ENCODE measurements at regions of chr4 and their contacts with region 1.

Region 1: DNA sequence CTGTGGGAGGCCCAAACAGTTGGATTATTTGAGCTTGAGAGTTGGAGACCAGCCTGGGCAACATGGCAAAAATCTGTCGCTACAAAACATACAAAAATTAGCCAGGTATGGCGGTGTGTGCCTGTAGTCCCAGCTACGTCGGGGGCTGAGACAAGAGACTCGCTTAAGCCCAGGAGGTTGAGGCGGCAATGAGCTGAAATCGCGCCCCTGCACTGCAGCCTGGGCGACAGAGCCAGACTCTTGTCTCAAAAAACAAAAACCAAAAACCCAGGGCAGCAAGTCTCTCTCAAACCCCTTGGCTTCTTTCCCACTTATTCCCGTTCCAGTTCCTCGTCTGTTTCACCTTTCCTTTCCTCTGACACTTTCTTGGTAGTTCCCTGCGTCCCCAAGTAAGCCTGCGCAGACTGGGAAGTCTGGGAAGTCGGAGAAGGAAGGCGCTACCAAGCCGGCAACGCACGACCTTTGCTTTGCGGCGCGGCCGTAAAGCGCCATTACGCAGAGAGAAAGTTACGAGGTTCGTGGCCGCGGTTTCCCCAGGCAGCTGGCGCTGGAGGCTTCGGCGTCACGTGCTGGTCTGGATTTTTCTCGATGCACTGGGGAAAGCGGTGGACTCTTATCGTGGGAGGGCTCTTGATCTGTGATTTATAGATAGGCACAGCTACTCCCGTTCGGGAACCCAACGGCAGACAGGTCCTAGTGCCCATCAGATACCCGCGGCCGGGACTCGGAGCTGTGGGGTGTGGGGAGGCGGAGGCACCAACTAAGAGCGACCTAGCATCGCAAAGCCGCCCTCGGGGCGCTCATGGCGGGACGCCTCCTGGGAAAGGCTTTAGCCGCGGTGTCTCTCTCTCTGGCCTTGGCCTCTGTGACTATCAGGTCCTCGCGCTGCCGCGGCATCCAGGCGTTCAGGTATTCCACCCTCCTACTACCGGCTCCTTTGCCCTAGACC is at the start of gene NUDT9:
- DNase-seq: peak; percentile 89
- H3K4me3 Mint-ChIP-seq: peak within 1 kb of the TSS; percentile 96
- H3K27ac Mint-ChIP-seq: peak within 1 kb of the TSS; percentile 93
- H3K4me1 Mint-ChIP-seq: peaks cover 30% of the 10 kb centered on the region
- H3K27me3 Mint-ChIP-seq: no peaks in the 10 kb centered on the region
- total RNA-seq, gene NUDT9: 7.4 to 8.4 TPM

Region 2: GRCh38 chr4:87390891-87391575 is 31.3 kb before region 1 on chr4 and contains the start of gene HSD17B11:
- CTCF ChIA-PET with region 1: interaction called, 34 read pairs
- POLR2A ChIA-PET with region 1: interaction called, 51 read pairs
- DNase-seq: peak; percentile 85
- H3K4me3 Mint-ChIP-seq: peak within 1 kb of the TSS; percentile 95
- H3K27ac Mint-ChIP-seq: peak within 1 kb of the TSS; percentile 77
- H3K4me1 Mint-ChIP-seq: peaks cover 37% of the 10 kb centered on the region
- H3K27me3 Mint-ChIP-seq: peaks cover 1% of the 10 kb centered on the region
- total RNA-seq, gene HSD17B11: 39.5 to 44.3 TPM

Region 3: GRCh38 chr4:87451537-87451936 is 29.2 kb after region 1 on chr4:
- CTCF ChIA-PET with region 1: no interaction called
- POLR2A ChIA-PET with region 1: no interaction called
- DNase-seq: no peak
- H3K4me3 Mint-ChIP-seq: no peak overlapping the region
- H3K27ac Mint-ChIP-seq: no peak overlapping the region
- H3K4me1 Mint-ChIP-seq: no peaks in the 10 kb centered on the region
- H3K27me3 Mint-ChIP-seq: no peaks in the 10 kb centered on the region